ENCODE measurements at regions of chr6 and their contacts with region 1.

Region 1: DNA sequence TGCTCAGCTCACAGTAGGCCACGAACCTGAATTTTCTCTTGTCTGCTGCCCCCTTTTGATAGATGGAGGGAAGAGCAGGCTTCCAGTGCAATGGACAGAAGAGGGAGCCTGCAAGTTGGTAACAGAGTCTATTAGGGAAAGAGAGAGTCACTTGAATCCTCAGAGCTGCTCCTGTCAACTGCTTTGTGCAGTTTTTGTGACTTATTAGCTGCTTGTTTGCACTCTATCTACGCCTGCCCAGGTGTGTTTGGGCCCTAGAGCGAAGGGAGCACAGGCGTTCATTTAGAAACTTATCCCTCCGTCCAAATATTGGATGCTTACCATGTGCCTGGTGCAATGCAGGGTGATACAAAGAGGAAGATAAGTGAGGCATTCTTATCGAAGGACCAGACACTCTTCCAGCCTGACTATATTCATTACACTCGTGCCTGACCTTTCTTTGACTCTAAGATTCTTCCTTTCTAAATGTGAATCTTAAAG is 11.6 kb upstream of the SLC2A12 start:
- DNase-seq: peak in 1 of 2 donors; percentile 37
- ATAC-seq: peak; percentile 90 to 98 (median 94)
- H3K4me3 ChIP-seq: no peak overlapping the region
- H3K27ac ChIP-seq: no peak overlapping the region
- H3K4me1 ChIP-seq: peaks cover 8% of the 10 kb centered on the region
- H3K27me3 ChIP-seq: no peaks in the 10 kb centered on the region
- CTCF ChIP-seq: peak; percentile 76

Region 2: GRCh38 chr6:133923938-133924593 is 139.9 kb before region 1 on chr6:
- intact Hi-C with region 1: loop called (anchors 10 kb)
- DNase-seq: peak in 1 of 2 donors; percentile 29
- ATAC-seq: peak; percentile 80 to 96 (median 94)
- H3K4me3 ChIP-seq: no peak overlapping the region
- H3K27ac ChIP-seq: no peak overlapping the region
- H3K4me1 ChIP-seq: no peaks in the 10 kb centered on the region
- H3K27me3 ChIP-seq: peaks cover 0 to 3% (median 0%) of the 10 kb centered on the region in 3 donors
- CTCF ChIP-seq: peak; percentile 85

Region 3: DNA sequence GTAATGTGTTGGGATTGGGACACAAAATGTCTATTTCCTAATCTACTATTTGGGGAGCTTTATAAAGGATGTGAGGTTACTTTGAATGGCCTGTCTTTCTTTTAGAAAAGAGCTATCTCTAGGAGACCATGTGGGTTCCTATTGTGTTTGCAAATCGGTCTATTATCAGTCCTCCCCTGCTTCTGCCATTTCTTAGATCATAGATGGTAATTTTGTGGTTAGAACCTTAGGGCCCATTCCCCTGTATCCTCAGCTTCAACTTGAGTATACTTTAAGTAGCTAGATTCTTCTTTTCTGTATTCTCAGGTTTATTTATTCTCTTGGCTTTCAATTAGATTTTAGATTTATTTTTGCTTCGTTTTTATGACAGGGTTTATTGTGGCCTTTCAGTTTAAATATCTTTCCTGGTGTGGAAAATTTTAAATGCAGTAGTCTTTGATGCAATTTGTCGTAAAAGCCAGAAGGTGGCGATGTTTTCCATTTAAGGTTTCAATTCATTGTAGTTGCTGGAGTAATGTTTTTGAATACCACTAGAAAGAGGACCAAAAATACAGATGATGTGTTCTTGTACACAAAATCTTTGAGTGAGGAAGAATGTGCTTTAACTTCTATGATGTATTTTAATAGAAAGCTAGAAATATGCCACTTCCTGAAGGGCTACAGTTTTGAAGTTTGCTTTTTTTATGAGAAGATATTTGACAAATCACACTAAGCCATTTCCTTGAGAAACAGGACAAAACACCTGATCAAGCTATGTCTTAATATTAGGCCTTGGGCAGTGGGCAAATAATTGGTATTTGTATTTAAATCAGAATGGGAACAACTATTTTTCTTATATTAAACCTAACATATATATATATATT is 90.7 kb before region 1 on chr6:
- intact Hi-C with region 1: loop called (anchors 1 to 2 kb)
- DNase-seq: no peak
- ATAC-seq: peak in 1 of 4 donors; percentile 75
- H3K4me3 ChIP-seq: no peak overlapping the region
- H3K27ac ChIP-seq: no peak overlapping the region
- H3K4me1 ChIP-seq: peaks cover 31% of the 10 kb centered on the region
- H3K27me3 ChIP-seq: no peaks in the 10 kb centered on the region
- CTCF ChIP-seq: peak; percentile 79

Region 4: GRCh38 chr6:135710042-135710441 is 1646.0 kb after region 1 on chr6:
- intact Hi-C with region 1: loop called in 1 of 2 experiments (anchors 5 kb)
- DNase-seq: no peak
- ATAC-seq: no peak
- H3K4me3 ChIP-seq: no peak overlapping the region
- H3K27ac ChIP-seq: no peak overlapping the region
- H3K4me1 ChIP-seq: no peaks in the 10 kb centered on the region
- H3K27me3 ChIP-seq: no peaks in the 10 kb centered on the region
- CTCF ChIP-seq: no peak

Measured in psoas muscle (tissue), 8 donors.